ENCODE measurements at regions of chr12 and their contacts with region 1.

Region 1: GRCh38 chr12:55829967-55830600 is 697 bp upstream of the DNAJC14 start:
- DNase-seq: peak; percentile 67
- ATAC-seq: peak; percentile 24
- H3K4me3 Mint-ChIP-seq: peak overlapping the region; percentile 97
- H3K27ac Mint-ChIP-seq: peak overlapping the region; percentile 93
- H3K4me1 Mint-ChIP-seq: peaks cover 44% of the 10 kb centered on the region
- H3K27me3 Mint-ChIP-seq: no peaks in the 10 kb centered on the region

Region 2: GRCh38 chr12:55817346-55818139 is 12.5 kb before region 1 on chr12 and contains the starts of genes ORMDL2 and SARNP:
- CTCF ChIA-PET with region 1: interaction called, 42 read pairs
- DNase-seq: peak; percentile 100
- ATAC-seq: peak; percentile 96
- H3K4me3 Mint-ChIP-seq: no peak within 1 kb of the TSS
- H3K27ac Mint-ChIP-seq: no peak within 1 kb of the TSS
- H3K4me1 Mint-ChIP-seq: peaks cover 41% of the 10 kb centered on the region
- H3K27me3 Mint-ChIP-seq: no peaks in the 10 kb centered on the region
- total RNA-seq, gene ORMDL2: 45.8 to 57.2 TPM
- total RNA-seq, gene SARNP: 96.8 to 98.6 TPM

Measured in activated CD8-positive, alpha-beta memory T cell treated with anti-CD3 and anti-CD28 coated beads, Interleukin-2, amount 10 ng/mL, durations not matched to agents 7 days and 5 days (primary cell).